ENCODE measurements at regions of chr3 and their contacts with region 1.

Region 1: DNA sequence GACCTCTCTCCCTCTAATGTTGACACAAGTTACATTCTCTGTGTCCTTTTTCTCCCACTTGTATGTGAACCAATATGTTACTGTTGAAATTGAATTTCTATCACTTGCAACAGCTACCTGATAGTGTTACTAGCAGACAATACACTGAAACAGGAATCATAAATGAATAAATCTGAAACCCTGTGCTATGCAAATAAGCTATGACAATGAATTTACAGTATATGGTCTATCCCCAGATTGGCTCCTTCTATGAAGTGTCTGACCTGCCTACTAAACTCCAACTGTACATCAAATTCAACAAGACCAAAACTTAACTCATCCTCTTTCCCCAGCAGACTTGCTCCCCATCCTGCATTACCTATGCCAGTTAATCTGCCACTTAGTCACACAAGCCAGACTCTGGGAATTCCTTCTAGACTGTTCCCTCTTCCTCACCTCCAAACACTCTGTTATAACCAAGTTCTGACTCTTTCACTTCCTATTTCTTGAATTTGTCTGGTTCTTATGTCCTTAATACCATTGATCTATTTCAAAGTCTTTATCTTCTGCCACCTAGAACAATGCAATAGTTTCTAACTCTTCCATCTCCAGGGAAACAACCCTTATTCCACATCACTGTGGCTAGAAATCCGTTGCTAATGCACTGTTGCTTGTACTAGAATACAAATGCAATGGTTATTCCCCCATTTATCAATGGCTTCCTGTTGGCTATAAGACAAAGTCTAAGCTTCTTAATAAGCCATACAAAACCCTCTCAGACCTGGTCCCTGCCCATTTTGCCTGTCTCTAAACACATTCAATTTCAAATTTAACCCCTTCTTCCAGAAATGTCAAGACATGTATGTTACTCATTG is 13.4 kb upstream of the ZNF639 start:
- DNase-seq: no peak
- ATAC-seq: no peak
- H3K4me3 ChIP-seq: no peak overlapping the region
- H3K27ac ChIP-seq: no peak overlapping the region
- H3K4me1 ChIP-seq: no peaks in the 10 kb centered on the region
- CTCF ChIP-seq: no peak
- EP300 ChIP-seq: no peak
- POLR2A ChIP-seq: no peak
- RAD21 ChIP-seq: no peak

Region 2: DNA sequence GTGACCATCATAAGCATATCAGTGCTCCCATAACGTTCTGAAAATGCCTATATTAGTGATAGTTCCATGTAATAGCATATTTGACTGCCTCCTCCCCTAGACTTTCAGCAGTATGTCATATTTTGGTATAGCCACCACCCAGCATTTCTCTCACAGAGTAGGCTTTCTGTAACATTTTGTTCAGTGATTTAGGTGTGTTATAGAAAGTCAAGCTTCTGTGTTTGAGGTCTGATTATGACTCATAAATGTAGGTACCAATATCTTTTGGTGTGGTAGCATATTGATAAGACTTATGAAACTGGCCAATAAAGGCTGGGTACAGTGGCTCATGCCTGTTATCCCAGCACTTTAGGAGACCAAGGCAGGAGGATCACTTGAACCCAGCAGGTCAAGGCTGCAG is 203.6 kb before region 1 on chr3:
- CTCF ChIA-PET with region 1: interaction called, 16 read pairs
- POLR2A ChIA-PET with region 1: no interaction called
- DNase-seq: no peak
- ATAC-seq: no peak
- H3K4me3 ChIP-seq: no peak overlapping the region
- H3K27ac ChIP-seq: no peak overlapping the region
- H3K4me1 ChIP-seq: no peaks in the 10 kb centered on the region
- CTCF ChIP-seq: no peak
- EP300 ChIP-seq: no peak
- POLR2A ChIP-seq: no peak
- RAD21 ChIP-seq: no peak

Region 3: DNA sequence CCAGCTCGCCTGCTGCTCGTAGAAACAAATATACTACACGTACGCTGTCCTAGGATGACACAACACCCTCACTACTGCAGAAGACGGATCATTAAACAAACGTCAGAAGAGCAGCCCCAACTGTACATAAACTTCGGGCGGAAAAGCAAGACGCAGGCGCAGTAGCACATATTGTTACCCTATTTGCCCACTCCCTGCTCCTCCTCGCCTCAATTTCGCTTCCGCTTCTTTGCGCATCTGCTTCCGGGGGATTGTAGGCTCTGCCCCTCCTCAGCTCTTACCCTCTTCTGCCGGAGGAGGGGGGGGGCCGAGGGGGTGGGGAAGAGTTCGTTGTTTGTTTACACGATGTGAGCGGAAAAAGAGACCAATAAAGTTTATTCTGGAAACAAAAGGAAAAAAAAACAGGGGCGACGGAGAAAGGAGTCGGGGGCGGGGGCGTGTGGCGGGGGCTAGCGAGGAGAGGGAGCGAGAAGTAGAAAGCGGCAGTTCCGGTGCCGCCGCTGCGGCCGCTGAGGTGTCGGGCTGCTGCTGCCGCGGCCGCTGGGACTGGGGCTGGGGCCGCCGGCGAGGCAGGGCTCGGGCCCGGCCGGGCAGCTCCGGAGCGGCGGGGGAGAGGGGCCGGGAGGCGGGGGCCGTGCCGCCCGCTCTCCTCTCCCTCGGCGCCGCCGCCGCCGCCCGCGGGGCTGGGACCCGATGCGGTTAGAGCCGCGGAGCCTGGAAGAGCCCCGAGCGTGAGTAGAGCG is 161.4 kb before region 1 on chr3 and contains the start of gene PIK3CA:
- CTCF ChIA-PET with region 1: interaction called, 13 read pairs
- POLR2A ChIA-PET with region 1: no interaction called
- DNase-seq: peak; percentile 68 to 95
- ATAC-seq: peak; percentile 89 to 94
- H3K4me3 ChIP-seq: peak within 1 kb of the TSS; percentile 97
- H3K27ac ChIP-seq: peak within 1 kb of the TSS; percentile 96 to 97
- H3K4me1 ChIP-seq: 0 out of 3 replicates have a peak, but pooled peaks cover 11% of the 10 kb centered on the region
- CTCF ChIP-seq: no peak
- EP300 ChIP-seq: no peak
- POLR2A ChIP-seq: peak; percentile 24
- RAD21 ChIP-seq: no peak
- polyA plus RNA-seq, gene PIK3CA: 9.1 and 10.3 TPM in 2 replicates

Measured in A549 (cell line).